Activated naive CD4-positive, alpha-beta T cell treated with anti-CD3 and anti-CD28 coated beads for 36 hours (primary cell): ENCODE measurements at regions of chr15 and their contacts with region 1.

Region 1: DNA sequence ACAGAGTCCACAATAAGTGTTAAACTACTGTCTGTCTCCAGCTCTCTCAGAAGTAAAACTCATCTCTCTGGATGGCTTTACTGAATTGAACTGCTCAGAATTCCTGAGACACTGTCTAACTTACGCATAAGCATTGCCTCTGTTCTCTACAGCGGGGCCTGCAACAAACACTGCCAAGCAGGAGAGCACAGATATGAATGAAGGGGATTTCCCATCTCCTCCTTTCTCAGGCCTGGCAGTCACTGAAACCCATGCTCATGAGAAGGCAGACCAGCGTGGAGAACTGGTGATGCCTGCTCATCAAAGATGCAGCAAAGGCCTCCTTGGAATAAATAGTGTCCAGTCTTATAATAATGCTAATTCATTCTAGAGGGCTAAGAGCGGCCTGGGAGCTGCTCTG is 10.3 kb downstream of the RASGRP1 start:
- DNase-seq: peak; percentile 72
- H3K4me3 Mint-ChIP-seq: no peak overlapping the region
- H3K27ac Mint-ChIP-seq: peak overlapping the region; percentile 92
- H3K4me1 Mint-ChIP-seq: peaks cover 90% of the 10 kb centered on the region
- H3K27me3 Mint-ChIP-seq: no peaks in the 10 kb centered on the region

Region 2: GRCh38 chr15:38072348-38073177 is 481.8 kb before region 1 on chr15:
- CTCF ChIA-PET with region 1: no interaction called
- intact Hi-C with region 1: loop called (anchors 10 kb)
- DNase-seq: peak; percentile 47
- H3K4me3 Mint-ChIP-seq: peak overlapping the region; percentile 44
- H3K27ac Mint-ChIP-seq: no peak overlapping the region
- H3K4me1 Mint-ChIP-seq: peaks cover 34% of the 10 kb centered on the region
- H3K27me3 Mint-ChIP-seq: peaks cover 65% of the 10 kb centered on the region

Region 3: GRCh38 chr15:38530113-38530512 is 24.2 kb before region 1 on chr15:
- CTCF ChIA-PET with region 1: interaction called, 5 read pairs
- intact Hi-C with region 1: loop called (anchors 1 kb)
- DNase-seq: peak; percentile 75
- H3K4me3 Mint-ChIP-seq: no peak overlapping the region
- H3K27ac Mint-ChIP-seq: peak overlapping the region; percentile 80
- H3K4me1 Mint-ChIP-seq: peaks cover 86% of the 10 kb centered on the region
- H3K27me3 Mint-ChIP-seq: no peaks in the 10 kb centered on the region

Region 4: GRCh38 chr15:38536201-38536676 is 18.1 kb before region 1 on chr15:
- CTCF ChIA-PET with region 1: interaction called, 5 read pairs
- intact Hi-C with region 1: loop called (anchors 1 kb)
- DNase-seq: no peak
- H3K4me3 Mint-ChIP-seq: no peak overlapping the region
- H3K27ac Mint-ChIP-seq: peak overlapping the region; percentile 26
- H3K4me1 Mint-ChIP-seq: peaks cover 96% of the 10 kb centered on the region
- H3K27me3 Mint-ChIP-seq: no peaks in the 10 kb centered on the region